A673 (cell line): ENCODE measurements at regions of chr9 and their contacts with region 1.

Region 1: DNA sequence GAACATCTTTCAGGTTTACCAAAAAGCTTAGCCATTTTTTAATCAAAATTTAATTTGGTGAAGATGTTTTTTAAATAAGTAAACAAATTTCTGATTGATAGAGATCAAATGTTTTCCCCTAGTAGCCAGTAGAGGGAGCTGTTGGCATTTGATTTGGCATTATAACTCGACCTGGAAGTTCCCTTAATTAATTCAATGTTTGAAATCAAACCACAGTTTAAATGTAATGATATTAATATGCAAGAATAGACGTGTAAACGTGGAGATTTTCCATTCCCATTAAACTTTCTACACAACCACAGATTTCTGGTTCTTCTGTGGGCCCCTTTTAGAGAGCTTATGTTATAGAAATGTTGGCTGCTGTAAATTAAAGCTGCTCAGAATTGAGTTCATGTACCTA is 148.1 kb upstream of the MPDZ start:
- DNase-seq: peak; percentile 60
- H3K4me3 ChIP-seq: no peak overlapping the region
- H3K27ac ChIP-seq: no peak overlapping the region
- H3K4me1 ChIP-seq: peaks cover 23% of the 10 kb centered on the region
- H3K27me3 ChIP-seq: no peaks in the 10 kb centered on the region
- CTCF ChIP-seq: peak; percentile 77

Region 2: GRCh38 chr9:13033959-13034693 is 393.5 kb before region 1 on chr9:
- CTCF ChIA-PET with region 1: no interaction called
- POLR2A ChIA-PET with region 1: no interaction called
- intact Hi-C with region 1: loop called (anchors 10 kb)
- DNase-seq: peak; percentile 80
- H3K4me3 ChIP-seq: peak overlapping the region; percentile 17
- H3K27ac ChIP-seq: no peak overlapping the region
- H3K4me1 ChIP-seq: no peaks in the 10 kb centered on the region
- H3K27me3 ChIP-seq: no peaks in the 10 kb centered on the region
- CTCF ChIP-seq: peak; percentile 82

Region 3: DNA sequence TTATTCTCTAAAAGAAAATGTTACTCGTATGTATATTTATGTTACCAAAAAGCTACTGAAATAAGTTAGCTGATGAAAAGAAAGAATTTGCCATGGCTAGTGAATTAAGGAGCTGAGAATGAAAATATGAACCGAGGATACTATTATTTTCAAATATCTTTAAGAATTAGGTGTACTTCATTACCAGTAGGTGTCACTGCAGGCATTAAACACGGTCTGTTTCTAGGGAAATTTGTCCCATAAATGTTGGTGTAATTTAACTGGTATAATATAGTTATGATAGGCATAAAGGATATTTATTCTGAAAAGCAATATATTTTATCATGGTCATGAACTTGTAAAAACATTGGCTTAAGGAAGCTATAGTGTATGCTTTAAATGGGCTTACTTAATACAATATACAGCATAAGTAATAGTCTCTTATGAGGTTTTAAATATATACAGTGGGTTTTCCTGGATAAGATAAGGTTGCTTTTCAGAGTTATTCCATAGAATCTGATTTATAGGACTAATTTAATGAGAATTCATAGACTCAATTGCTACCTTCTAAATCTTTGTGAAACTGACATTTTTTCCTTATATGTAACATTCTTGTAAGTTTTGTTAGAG is 75.7 kb before region 1 on chr9:
- CTCF ChIA-PET with region 1: no interaction called
- POLR2A ChIA-PET with region 1: no interaction called
- intact Hi-C with region 1: loop called (anchors 5 kb)
- DNase-seq: peak; percentile 63
- H3K4me3 ChIP-seq: no peak overlapping the region
- H3K27ac ChIP-seq: no peak overlapping the region
- H3K4me1 ChIP-seq: no peaks in the 10 kb centered on the region
- H3K27me3 ChIP-seq: no peaks in the 10 kb centered on the region
- CTCF ChIP-seq: peak; percentile 75

Region 4: DNA sequence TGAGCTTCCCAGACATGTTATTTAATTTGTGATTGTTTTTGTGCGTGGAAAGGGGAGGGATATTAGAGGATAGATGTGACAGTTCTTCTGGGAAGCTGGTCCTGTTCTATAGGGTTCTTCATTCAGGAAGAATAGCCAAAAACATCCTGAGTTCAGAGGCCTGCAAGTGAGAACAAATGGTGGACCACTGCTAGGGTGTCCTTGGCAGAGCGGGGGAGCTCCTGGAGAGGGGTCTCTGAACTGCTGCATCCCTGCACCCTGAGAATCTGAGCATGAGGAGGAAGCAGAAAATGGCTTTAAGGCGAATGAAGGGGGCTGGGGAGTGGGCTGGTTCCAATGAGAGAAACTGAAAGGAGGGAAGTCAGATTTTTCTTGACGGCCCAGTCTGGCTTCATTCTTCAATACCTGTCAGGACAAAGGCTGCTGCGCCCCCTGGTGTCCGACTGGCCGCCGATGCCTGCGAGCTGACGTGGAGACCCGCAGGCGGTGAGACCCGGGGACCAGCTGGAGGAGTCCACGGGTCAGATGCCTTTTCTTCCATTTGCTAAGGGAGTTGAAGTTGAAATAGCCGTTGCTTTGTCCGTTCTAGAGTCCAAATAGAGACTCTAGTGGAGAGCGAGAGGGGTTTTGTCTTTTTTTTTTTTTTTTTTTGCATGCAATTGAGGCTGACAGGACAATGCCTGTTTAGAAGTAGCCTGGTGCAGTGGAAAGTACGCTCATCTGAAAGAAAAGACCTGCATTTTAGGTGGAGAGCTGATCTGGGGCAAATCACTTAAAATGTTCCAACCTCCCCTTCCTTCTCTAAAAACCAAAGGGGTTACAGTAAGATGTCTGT is 925.9 kb after region 1 on chr9:
- CTCF ChIA-PET with region 1: no interaction called
- POLR2A ChIA-PET with region 1: no interaction called
- intact Hi-C with region 1: loop called (anchors 5 kb)
- DNase-seq: peak; percentile 79
- H3K4me3 ChIP-seq: no peak overlapping the region
- H3K27ac ChIP-seq: no peak overlapping the region
- H3K4me1 ChIP-seq: no peaks in the 10 kb centered on the region
- H3K27me3 ChIP-seq: no peaks in the 10 kb centered on the region
- CTCF ChIP-seq: peak; percentile 80

Region 5: DNA sequence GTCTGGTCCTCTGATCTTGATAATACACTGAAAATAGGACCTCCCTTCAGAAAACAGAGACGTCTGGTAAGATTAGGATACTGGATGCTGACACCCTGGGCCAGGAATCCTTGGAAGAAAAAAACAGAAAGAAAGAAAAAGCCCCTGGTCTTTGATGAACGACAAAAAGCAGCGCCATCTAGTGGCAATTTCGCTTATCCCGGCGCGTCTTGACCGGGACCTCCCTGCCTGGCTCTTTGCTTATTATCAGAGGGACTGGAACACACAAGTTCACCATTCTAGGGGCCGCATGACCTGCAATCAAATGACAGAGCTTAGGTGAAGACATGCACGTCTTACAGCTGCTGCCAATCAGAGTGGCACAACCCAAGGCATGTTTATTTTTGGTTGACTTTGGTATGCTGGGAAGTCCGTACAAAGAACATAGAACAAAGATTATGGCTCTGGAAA is 1001.2 kb after region 1 on chr9:
- CTCF ChIA-PET with region 1: no interaction called
- POLR2A ChIA-PET with region 1: no interaction called
- intact Hi-C with region 1: loop called (anchors 5 kb)
- DNase-seq: peak; percentile 77
- H3K4me3 ChIP-seq: no peak overlapping the region
- H3K27ac ChIP-seq: no peak overlapping the region
- H3K4me1 ChIP-seq: peaks cover 6% of the 10 kb centered on the region
- H3K27me3 ChIP-seq: no peaks in the 10 kb centered on the region
- CTCF ChIP-seq: peak; percentile 65